Activated CD4-positive, alpha-beta T cell treated with anti-CD3 and anti-CD28 coated beads for 36 hours (primary cell): ENCODE measurements at regions of chr5 and their contacts with region 1.

Region 1: GRCh38 chr5:180353048-180353979 is at the start of gene GFPT2:
- DNase-seq: peak; percentile 84
- ATAC-seq: peak; percentile 92
- H3K4me3 Mint-ChIP-seq: peak within 1 kb of the TSS; percentile 55
- H3K27ac Mint-ChIP-seq: no peak within 1 kb of the TSS
- H3K4me1 Mint-ChIP-seq: peaks cover 5% of the 10 kb centered on the region
- H3K27me3 Mint-ChIP-seq: peaks cover 35% of the 10 kb centered on the region
- total RNA-seq, gene GFPT2: 0.16 TPM

Region 2: DNA sequence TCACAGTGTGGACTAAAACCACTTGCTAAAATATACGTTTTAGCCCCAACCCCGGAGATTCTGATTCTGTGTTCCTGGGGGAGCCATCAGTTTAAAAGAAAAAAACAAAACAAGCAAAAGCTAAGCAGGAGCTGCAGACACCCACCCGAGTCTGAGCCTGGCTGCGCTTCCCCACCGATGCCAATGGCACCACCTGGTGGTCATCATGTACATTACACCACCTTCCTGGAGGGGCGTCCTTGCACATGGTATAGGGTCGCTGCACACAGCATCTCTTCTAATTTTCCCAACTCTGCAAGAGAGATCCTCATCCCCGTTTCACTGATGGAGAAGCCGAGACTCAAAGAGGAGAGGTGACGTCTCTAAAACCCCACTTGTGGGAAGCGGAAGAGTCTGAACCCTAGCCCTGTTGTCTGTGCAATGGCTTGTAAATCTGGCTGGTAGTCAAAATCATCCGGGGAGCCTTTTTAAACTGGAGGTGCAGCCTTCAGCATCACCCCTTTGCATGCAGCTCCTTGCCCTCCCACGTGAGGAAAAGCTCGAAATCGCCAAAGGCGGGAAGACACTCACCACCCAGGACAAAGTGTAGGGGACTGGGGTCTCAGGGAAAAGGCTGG is 117.8 kb after region 1 on chr5:
- CTCF ChIA-PET with region 1: no interaction called
- POLR2A ChIA-PET with region 1: no interaction called
- intact Hi-C with region 1: loop called in 1 of 2 experiments (anchors 1 kb)
- DNase-seq: peak; percentile 70
- ATAC-seq: peak; percentile 82
- H3K4me3 Mint-ChIP-seq: no peak overlapping the region
- H3K27ac Mint-ChIP-seq: no peak overlapping the region
- H3K4me1 Mint-ChIP-seq: no peaks in the 10 kb centered on the region
- H3K27me3 Mint-ChIP-seq: peaks cover 4% of the 10 kb centered on the region

Region 3: DNA sequence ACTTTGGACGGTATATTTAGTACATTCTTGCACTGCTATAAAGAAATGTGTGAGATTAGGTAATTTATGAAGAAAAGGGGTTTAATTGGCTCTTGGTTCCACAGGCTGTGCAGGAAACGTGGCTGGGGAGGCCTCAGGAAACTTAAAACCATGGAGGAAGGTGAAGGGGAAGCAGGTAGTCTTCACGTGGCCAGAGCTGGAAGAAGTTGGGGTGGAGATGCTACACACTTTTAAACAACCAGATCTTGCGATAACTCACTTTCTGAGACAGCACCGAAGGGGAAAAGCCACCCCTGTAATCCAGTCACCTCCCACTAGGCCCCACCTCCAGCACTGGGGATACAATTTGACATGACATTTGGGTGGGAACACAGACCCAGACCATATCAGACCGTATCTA is 154.3 kb after region 1 on chr5:
- CTCF ChIA-PET with region 1: no interaction called
- POLR2A ChIA-PET with region 1: interaction called, 12 read pairs
- intact Hi-C with region 1: no loop called
- DNase-seq: no peak
- ATAC-seq: no peak
- H3K4me3 Mint-ChIP-seq: no peak overlapping the region
- H3K27ac Mint-ChIP-seq: no peak overlapping the region
- H3K4me1 Mint-ChIP-seq: peaks cover 31% of the 10 kb centered on the region
- H3K27me3 Mint-ChIP-seq: no peaks in the 10 kb centered on the region